ENCODE measurements at regions of chr5 and their contacts with region 1.

Region 1: GRCh38 chr5:132963175-132964104 is at the start of gene AFF4:
- DNase-seq: peak; percentile 97 to 99 (median 99)
- ATAC-seq: peak; percentile 93 to 98 (median 96)
- H3K4me3 ChIP-seq: peak within 1 kb of the TSS; percentile 70 to 98 (median 92)
- H3K27ac ChIP-seq: peak within 1 kb of the TSS; percentile 86 to 100 (median 98)
- H3K4me1 ChIP-seq: peaks cover 0 to 43% (median 25%) of the 10 kb centered on the region in 12 donors
- H3K27me3 ChIP-seq: no peaks in the 10 kb centered on the region
- CTCF ChIP-seq: peak in 1 of 12 donors; percentile 10
- POLR2A ChIP-seq: peak; percentile 59 to 97
- total RNA-seq, gene AFF4: 33.1 to 65.8 (median 53.4) TPM

Region 2: GRCh38 chr5:132896685-132897084 is 66.8 kb before region 1 on chr5:
- intact Hi-C with region 1: loop called in 2 of 10 experiments (anchors 5 to 10 kb)
- DNase-seq: no peak
- ATAC-seq: no peak
- H3K4me3 ChIP-seq: no peak overlapping the region
- H3K27ac ChIP-seq: peak overlapping the region in 2 of 12 donors; percentile 9 to 73
- H3K4me1 ChIP-seq: peaks cover 0 to 24% (median 5%) of the 10 kb centered on the region in 12 donors
- H3K27me3 ChIP-seq: no peaks in the 10 kb centered on the region
- CTCF ChIP-seq: no peak
- POLR2A ChIP-seq: no peak

Region 3: DNA sequence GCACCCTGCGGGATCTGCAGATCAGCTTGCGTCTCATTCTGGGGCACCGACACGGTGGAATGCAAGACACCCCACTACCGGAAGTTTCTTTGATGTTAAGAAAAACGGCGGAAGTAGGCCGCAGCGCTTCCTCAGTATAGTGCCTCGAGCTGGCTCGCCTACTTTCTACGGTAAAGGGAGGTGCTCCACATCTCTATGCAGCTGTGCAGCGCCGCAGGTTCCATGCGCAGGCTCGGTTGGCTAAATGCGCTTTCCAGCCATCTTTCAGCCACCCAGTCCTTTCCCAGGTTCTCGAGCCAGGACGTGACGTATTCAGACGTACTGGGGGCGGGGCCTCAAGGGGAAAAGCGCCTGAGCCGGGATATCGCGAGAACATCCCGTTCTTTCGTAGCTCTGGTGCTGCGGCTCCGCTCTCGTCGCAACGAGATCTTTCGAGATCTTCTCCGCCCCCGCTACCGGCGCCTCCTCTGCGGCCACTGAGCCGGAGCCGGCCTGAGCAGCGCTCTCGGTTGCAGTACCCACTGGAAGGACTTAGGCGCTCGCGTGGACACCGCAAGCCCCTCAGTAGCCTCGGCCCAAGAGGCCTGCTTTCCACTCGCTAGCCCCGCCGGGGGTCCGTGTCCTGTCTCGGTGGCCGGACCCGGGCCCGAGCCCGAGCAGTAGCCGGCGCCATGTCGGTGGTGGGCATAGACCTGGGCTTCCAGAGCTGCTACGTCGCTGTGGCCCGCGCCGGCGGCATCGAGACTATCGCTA is 88.3 kb after region 1 on chr5 and contains the start of gene HSPA4:
- intact Hi-C with region 1: loop called in 6 of 10 experiments (anchors 1 to 10 kb)
- DNase-seq: peak; percentile 97 to 98 (median 98)
- ATAC-seq: peak; percentile 87 to 95 (median 92)
- H3K4me3 ChIP-seq: peak within 1 kb of the TSS; percentile 54 to 99 (median 80)
- H3K27ac ChIP-seq: peak within 1 kb of the TSS; percentile 87 to 99 (median 97)
- H3K4me1 ChIP-seq: peaks cover 5 to 51% (median 40%) of the 10 kb centered on the region in 12 donors
- H3K27me3 ChIP-seq: no peaks in the 10 kb centered on the region
- CTCF ChIP-seq: no peak
- POLR2A ChIP-seq: peak; percentile 82 to 96
- total RNA-seq, gene HSPA4: 57.5 to 132 (median 98.5) TPM

Region 4: DNA sequence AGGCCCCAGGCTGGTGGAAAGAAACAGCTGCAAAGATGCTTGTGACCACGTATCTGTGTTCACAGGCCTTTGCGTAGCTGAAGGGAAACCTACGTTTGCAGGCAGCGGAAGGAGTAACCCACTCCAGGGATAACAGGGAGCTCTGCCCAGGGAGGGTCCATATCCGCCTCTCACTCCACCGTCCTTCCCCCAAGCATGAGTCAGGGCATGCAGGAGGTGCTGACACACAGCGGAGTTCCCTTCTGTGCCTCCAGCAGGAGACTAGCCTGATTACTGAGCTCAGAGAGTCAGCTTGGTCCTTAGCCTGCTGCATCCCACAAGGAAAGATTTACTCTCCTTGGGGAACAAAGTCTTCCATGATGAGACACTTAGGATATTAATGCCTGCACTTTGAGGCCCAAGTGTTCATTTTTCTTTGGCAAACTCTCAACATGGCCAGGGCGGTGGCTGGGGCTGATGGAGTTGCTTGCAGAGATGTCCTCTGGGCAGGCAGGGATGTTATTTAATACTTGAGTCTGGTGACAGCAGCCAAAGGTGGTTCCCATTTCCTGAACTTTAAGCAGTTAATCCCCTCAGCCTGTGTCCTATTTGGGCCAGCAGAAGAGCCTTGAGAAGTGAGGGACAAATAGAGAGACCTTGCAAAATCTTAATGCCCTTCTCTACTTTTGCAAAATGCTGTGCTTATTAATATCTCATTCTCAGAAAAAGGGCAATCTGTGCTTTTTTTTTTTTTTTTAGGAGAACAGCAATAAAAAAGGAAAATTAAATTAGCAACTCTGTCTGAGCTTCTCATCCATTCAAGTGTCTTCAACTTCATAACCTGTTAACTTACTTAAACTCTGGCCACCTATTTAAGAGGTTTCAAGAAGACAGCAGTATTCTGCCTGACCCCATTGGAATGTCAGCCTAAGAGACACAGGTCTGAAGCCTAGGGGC is 310.5 kb after region 1 on chr5:
- intact Hi-C with region 1: no loop called
- DNase-seq: no peak
- ATAC-seq: peak in 2 of 4 donors; percentile 34 to 52
- H3K4me3 ChIP-seq: no peak overlapping the region
- H3K27ac ChIP-seq: no peak overlapping the region
- H3K4me1 ChIP-seq: no peaks in the 10 kb centered on the region
- H3K27me3 ChIP-seq: no peaks in the 10 kb centered on the region
- CTCF ChIP-seq: no peak
- POLR2A ChIP-seq: no peak

Measured in heart left ventricle (tissue), 16 donors.